Activated naive CD4-positive, alpha-beta T cell treated with anti-CD3 and anti-CD28 coated beads for 36 hours (primary cell): ENCODE measurements at regions of chr21 and their contacts with region 1.

Region 1: GRCh38 chr21:17819114-17819876 is at the start of gene C21orf91:
- DNase-seq: peak; percentile 92
- H3K4me3 Mint-ChIP-seq: peak within 1 kb of the TSS; percentile 96
- H3K27ac Mint-ChIP-seq: peak within 1 kb of the TSS; percentile 98
- H3K4me1 Mint-ChIP-seq: peaks cover 39% of the 10 kb centered on the region
- H3K27me3 Mint-ChIP-seq: no peaks in the 10 kb centered on the region
- total RNA-seq, gene C21orf91: 25.6 to 25.8 TPM

Region 2: DNA sequence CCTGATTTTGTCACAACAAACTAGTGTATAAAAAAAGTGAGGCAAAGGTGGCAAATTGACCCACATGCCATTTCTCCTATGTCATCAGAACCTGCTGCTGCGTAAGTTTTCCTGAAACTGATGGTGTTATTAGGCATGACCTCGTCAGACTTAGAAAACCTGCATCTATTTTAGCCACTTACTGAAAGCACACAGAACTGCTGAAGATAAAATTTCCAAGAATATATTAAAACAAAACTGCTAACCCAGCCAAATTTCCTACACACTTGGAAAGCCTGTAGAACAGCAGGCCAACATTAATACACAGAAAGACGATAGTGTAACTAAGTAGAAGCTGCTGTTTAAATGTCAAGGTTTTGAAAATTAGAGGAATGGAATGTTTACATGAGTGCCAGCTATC is 981.0 kb before region 1 on chr21:
- CTCF ChIA-PET with region 1: no interaction called
- intact Hi-C with region 1: no loop called
- DNase-seq: no peak
- H3K4me3 Mint-ChIP-seq: no peak overlapping the region
- H3K27ac Mint-ChIP-seq: no peak overlapping the region
- H3K4me1 Mint-ChIP-seq: no peaks in the 10 kb centered on the region
- H3K27me3 Mint-ChIP-seq: no peaks in the 10 kb centered on the region

Region 3: DNA sequence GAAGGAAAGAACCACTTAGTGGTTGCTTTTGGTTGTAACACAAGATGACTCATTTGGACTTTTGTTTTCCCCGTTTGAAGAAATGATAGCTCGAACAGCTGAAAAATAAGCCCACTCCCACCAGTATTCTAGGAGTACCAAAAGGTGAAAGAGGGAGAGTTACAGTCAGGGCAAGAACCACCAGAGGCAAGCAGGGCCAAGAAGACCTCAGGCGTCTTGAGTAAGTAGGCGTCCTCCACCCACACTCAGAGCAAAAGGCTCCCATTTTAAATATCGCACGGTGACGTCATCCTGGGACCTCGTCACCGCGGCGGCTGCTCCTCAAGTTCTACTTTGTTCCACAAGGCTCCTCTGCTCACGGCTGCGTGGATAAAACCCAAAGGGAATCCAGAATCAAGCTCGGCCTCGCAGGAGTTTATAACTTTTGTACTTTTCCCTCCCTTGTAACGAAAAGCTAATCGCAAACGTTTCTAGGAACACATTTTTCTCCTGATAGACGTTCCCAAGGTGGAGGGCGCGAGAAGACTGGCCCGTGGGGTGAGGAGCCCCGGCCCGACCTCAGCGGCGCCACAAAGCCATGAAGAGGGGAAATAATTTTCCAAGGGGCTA is 207.8 kb before region 1 on chr21:
- CTCF ChIA-PET with region 1: no interaction called
- intact Hi-C with region 1: loop called (anchors 1 kb)
- DNase-seq: peak; percentile 88
- H3K4me3 Mint-ChIP-seq: peak overlapping the region; percentile 83
- H3K27ac Mint-ChIP-seq: peak overlapping the region; percentile 91
- H3K4me1 Mint-ChIP-seq: peaks cover 31% of the 10 kb centered on the region
- H3K27me3 Mint-ChIP-seq: no peaks in the 10 kb centered on the region

Region 4: GRCh38 chr21:17688912-17689874 is 130.1 kb before region 1 on chr21:
- CTCF ChIA-PET with region 1: no interaction called
- intact Hi-C with region 1: loop called (anchors 2 kb)
- DNase-seq: peak; percentile 74
- H3K4me3 Mint-ChIP-seq: no peak overlapping the region
- H3K27ac Mint-ChIP-seq: no peak overlapping the region
- H3K4me1 Mint-ChIP-seq: peaks cover 32% of the 10 kb centered on the region
- H3K27me3 Mint-ChIP-seq: peaks cover 2% of the 10 kb centered on the region

Region 5: DNA sequence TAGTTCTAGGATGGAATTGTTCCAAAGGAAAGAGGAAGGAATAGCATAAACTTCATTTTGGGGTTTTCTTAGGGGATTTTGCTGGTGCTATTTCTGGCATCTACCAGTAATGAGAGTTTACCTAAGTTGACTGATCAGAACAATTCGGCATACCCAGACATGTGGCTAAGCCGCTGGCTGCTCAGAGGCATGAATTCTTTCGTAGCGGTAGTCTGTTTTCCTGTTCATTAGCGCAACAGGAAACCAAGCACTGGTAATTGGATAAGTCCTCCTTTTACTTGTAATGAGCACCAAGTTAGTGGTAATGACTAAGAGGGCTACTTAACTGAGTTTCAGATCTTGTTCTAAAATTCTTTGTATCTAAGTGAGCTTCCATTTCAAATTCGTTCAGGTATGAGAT is 38.8 kb before region 1 on chr21:
- CTCF ChIA-PET with region 1: interaction called, 3 read pairs
- intact Hi-C with region 1: loop called (anchors 1 kb)
- DNase-seq: peak; percentile 77
- H3K4me3 Mint-ChIP-seq: peak overlapping the region; percentile 28
- H3K27ac Mint-ChIP-seq: peak overlapping the region; percentile 87
- H3K4me1 Mint-ChIP-seq: peaks cover 91% of the 10 kb centered on the region
- H3K27me3 Mint-ChIP-seq: no peaks in the 10 kb centered on the region

Region 6: GRCh38 chr21:17802572-17802971 is 16.7 kb before region 1 on chr21:
- CTCF ChIA-PET with region 1: interaction called, 5 read pairs
- intact Hi-C with region 1: loop called (anchors 1 kb)
- DNase-seq: no peak
- H3K4me3 Mint-ChIP-seq: no peak overlapping the region
- H3K27ac Mint-ChIP-seq: no peak overlapping the region
- H3K4me1 Mint-ChIP-seq: peaks cover 56% of the 10 kb centered on the region
- H3K27me3 Mint-ChIP-seq: no peaks in the 10 kb centered on the region

Region 7: GRCh38 chr21:17903029-17903806 is 83.9 kb after region 1 on chr21:
- CTCF ChIA-PET with region 1: no interaction called
- intact Hi-C with region 1: loop called (anchors 2 kb)
- DNase-seq: no peak
- H3K4me3 Mint-ChIP-seq: no peak overlapping the region
- H3K27ac Mint-ChIP-seq: no peak overlapping the region
- H3K4me1 Mint-ChIP-seq: peaks cover 8% of the 10 kb centered on the region
- H3K27me3 Mint-ChIP-seq: no peaks in the 10 kb centered on the region